Ovary (tissue), 10 donors: ENCODE measurements at regions of chr17 and their contacts with region 1.

Region 1: GRCh38 chr17:10875979-10876555 is 38.2 kb upstream of the PIRT start:
- DNase-seq: peak in 4 of 5 donors; percentile 20 to 40 (median 26)
- H3K4me3 ChIP-seq: no peak overlapping the region
- H3K27ac ChIP-seq: no peak overlapping the region
- H3K4me1 ChIP-seq: no peaks in the 10 kb centered on the region
- H3K27me3 ChIP-seq: no peaks in the 10 kb centered on the region
- CTCF ChIP-seq: peak; percentile 7 to 28 (median 25)
- EP300 ChIP-seq: no peak
- POLR2A ChIP-seq: no peak

Region 2: DNA sequence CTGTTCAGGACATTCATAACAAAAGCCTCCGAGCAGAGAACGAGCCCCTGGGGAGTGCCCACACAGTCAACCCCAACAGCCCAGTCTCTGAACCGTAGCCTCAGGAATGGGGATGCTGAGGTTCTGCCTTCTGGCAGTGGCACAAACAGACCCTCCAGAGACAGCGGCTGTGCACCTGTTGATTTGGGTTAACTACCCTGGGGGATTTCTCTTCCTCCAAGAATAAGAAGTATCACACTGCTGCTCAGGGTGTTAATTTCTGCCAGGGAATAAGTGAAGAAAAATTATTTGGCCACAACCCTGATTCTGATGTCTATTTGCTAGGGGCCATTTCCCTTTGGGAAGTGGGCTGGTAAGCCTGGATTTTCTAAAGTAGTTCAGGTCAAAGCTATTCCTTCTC is 12.8 kb after region 1 on chr17:
- intact Hi-C with region 1: no loop called
- DNase-seq: no peak
- H3K4me3 ChIP-seq: no peak overlapping the region
- H3K27ac ChIP-seq: no peak overlapping the region
- H3K4me1 ChIP-seq: no peaks in the 10 kb centered on the region
- H3K27me3 ChIP-seq: no peaks in the 10 kb centered on the region
- CTCF ChIP-seq: no peak
- EP300 ChIP-seq: no peak
- POLR2A ChIP-seq: no peak

Region 3: GRCh38 chr17:11644261-11645212 is 768.5 kb after region 1 on chr17:
- intact Hi-C with region 1: loop called in 1 of 4 experiments (anchors 10 kb)
- DNase-seq: peak; percentile 48 to 74 (median 67)
- H3K4me3 ChIP-seq: no peak overlapping the region
- H3K27ac ChIP-seq: no peak overlapping the region
- H3K4me1 ChIP-seq: no peaks in the 10 kb centered on the region
- H3K27me3 ChIP-seq: no peaks in the 10 kb centered on the region
- CTCF ChIP-seq: peak; percentile 58 to 71 (median 61)
- EP300 ChIP-seq: no peak
- POLR2A ChIP-seq: no peak